ENCODE measurements at regions of chr2 and their contacts with region 1.

Region 1: DNA sequence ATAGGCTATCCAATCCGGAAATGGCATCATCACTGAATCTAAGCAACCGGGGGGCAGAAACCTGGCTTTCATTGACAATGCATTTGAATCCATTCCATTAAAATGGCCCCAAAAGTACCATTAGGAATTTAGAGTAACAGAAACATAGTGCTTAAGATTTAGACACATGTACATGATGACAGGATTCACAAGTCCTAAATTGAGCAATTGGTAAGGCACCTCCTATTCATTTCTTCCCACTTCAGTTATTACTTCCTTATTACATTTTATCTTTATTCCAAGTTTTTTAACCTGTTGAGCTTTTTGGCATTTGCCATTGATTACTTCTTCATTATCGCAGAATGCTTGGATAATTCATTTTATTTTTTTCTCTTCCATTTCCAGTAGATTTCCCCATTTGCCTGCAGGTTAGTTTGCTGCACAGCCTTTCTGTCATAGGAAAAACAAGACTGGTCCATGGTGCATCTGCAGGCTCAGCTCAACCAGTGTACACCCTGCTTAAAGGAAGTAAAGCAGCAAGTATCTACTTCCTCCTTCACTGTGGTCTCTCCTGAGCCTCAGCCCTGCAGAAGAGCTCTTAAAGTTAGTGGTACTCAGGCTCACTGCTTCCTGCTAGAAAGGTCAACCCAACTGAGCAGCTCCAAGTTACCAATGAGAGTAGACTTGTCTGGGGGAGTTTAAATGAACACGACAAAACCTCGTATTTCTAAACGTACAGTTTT is 89.2 kb downstream of the DOCK10 start:
- DNase-seq: peak in 7 of 9 donors; percentile 27 to 65 (median 49)
- ATAC-seq: peak; percentile 88
- H3K4me3 ChIP-seq: peak overlapping the region; percentile 10
- H3K4me3 Mint-ChIP-seq: peak overlapping the region; percentile 27 to 78 (median 70)
- H3K27ac ChIP-seq: peak overlapping the region; percentile 8
- H3K27ac Mint-ChIP-seq: peak overlapping the region; percentile 74 to 95 (median 87)
- H3K4me1 ChIP-seq: peaks cover 51 to 72% of the 10 kb centered on the region in 2 donors
- H3K4me1 Mint-ChIP-seq: peaks cover 57 to 96% (median 94%) of the 10 kb centered on the region in 7 donors
- H3K27me3 ChIP-seq: no peaks in the 10 kb centered on the region
- H3K27me3 Mint-ChIP-seq: no peaks in the 10 kb centered on the region

Region 2: GRCh38 chr2:224922142-224922727 is 30.9 kb before region 1 on chr2:
- CTCF ChIA-PET with region 1: interaction called, 6 read pairs
- POLR2A ChIA-PET with region 1: interaction called, 7 read pairs
- intact Hi-C with region 1: loop called in 1 of 2 experiments (anchors 5 kb)
- DNase-seq: no peak
- ATAC-seq: peak; percentile 55
- H3K4me3 ChIP-seq: no peak overlapping the region
- H3K4me3 Mint-ChIP-seq: peak overlapping the region in 2 of 10 donors; percentile 15 to 17
- H3K27ac ChIP-seq: peak overlapping the region; percentile 44
- H3K27ac Mint-ChIP-seq: peak overlapping the region; percentile 26 to 99 (median 82)
- H3K4me1 ChIP-seq: peaks cover 35 to 52% of the 10 kb centered on the region in 2 donors
- H3K4me1 Mint-ChIP-seq: peaks cover 36 to 55% (median 50%) of the 10 kb centered on the region in 7 donors
- H3K27me3 ChIP-seq: no peaks in the 10 kb centered on the region
- H3K27me3 Mint-ChIP-seq: no peaks in the 10 kb centered on the region

Region 3: GRCh38 chr2:224938651-224939182 is 14.4 kb before region 1 on chr2:
- CTCF ChIA-PET with region 1: interaction called, 4 read pairs
- POLR2A ChIA-PET with region 1: interaction called, 13 read pairs
- intact Hi-C with region 1: loop called in 1 of 2 experiments (anchors 2 kb)
- DNase-seq: peak in 1 of 9 donors; percentile 56
- ATAC-seq: peak; percentile 56
- H3K4me3 ChIP-seq: no peak overlapping the region
- H3K4me3 Mint-ChIP-seq: peak overlapping the region; percentile 46 to 81 (median 68)
- H3K27ac ChIP-seq: peak overlapping the region; percentile 62
- H3K27ac Mint-ChIP-seq: peak overlapping the region; percentile 78 to 92 (median 86)
- H3K4me1 ChIP-seq: peaks cover 44 to 62% of the 10 kb centered on the region in 2 donors
- H3K4me1 Mint-ChIP-seq: peaks cover 60 to 100% (median 84%) of the 10 kb centered on the region in 7 donors
- H3K27me3 ChIP-seq: no peaks in the 10 kb centered on the region
- H3K27me3 Mint-ChIP-seq: no peaks in the 10 kb centered on the region

Region 4: GRCh38 chr2:224973112-224974016 is 20.3 kb after region 1 on chr2:
- CTCF ChIA-PET with region 1: interaction called, 3 read pairs
- POLR2A ChIA-PET with region 1: interaction called, 6 read pairs
- intact Hi-C with region 1: loop called (anchors 1 to 2 kb)
- DNase-seq: no peak
- ATAC-seq: peak; percentile 56
- H3K4me3 ChIP-seq: no peak overlapping the region
- H3K4me3 Mint-ChIP-seq: peak overlapping the region in 3 of 10 donors; percentile 19 to 49 (median 40)
- H3K27ac ChIP-seq: no peak overlapping the region
- H3K27ac Mint-ChIP-seq: peak overlapping the region in 7 of 9 donors; percentile 1 to 80 (median 69)
- H3K4me1 ChIP-seq: peaks cover 21 to 40% of the 10 kb centered on the region in 2 donors
- H3K4me1 Mint-ChIP-seq: peaks cover 55 to 96% (median 93%) of the 10 kb centered on the region in 7 donors
- H3K27me3 ChIP-seq: no peaks in the 10 kb centered on the region
- H3K27me3 Mint-ChIP-seq: no peaks in the 10 kb centered on the region

Region 5: DNA sequence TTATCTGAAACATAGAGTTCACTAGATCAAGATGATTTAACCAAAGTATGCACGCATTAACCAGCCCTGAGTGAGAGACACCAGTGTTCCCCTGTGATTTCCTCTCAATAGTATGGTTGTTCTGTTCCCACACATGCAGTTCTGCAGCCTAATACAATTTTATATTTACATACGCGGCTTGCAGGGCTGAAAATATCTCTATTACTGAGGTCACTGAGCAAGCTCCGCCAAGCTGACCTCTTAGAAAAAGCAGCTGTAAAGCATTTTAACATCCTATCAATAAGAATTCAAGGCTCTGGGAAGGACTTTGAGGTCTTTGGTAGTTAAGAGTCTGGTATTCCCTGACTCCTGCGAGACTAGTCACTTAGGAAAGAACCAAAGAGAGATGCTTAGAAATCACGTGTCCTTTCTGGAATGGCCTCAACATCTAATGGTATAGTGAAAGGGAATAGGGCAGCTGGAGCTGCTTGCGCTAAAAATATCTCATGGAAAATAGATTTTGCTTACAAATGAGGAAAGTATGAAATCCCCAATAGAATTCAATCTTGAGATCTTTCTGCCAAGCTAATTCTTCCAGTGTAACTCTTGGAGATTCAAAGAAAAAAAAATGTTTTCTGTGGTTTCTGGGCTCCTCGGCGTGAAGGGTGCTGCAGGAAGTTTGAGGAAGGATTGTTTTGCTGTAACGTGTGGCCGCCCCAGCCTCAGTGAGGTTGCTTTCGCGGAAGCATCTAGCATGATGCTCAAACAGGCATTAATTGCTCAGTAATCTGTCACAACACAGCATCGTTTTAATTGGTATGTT is 30.0 kb after region 1 on chr2:
- CTCF ChIA-PET with region 1: no interaction called
- POLR2A ChIA-PET with region 1: interaction called, 7 read pairs
- intact Hi-C with region 1: loop called in 1 of 2 experiments (anchors 1 kb)
- DNase-seq: peak in 7 of 9 donors; percentile 44 to 66 (median 52)
- ATAC-seq: peak; percentile 74
- H3K4me3 ChIP-seq: no peak overlapping the region
- H3K4me3 Mint-ChIP-seq: peak overlapping the region; percentile 63 to 85 (median 77)
- H3K27ac ChIP-seq: peak overlapping the region; percentile 50
- H3K27ac Mint-ChIP-seq: peak overlapping the region; percentile 85 to 97 (median 92)
- H3K4me1 ChIP-seq: peaks cover 42 to 58% of the 10 kb centered on the region in 2 donors
- H3K4me1 Mint-ChIP-seq: peaks cover 55 to 91% (median 89%) of the 10 kb centered on the region in 7 donors
- H3K27me3 ChIP-seq: no peaks in the 10 kb centered on the region
- H3K27me3 Mint-ChIP-seq: no peaks in the 10 kb centered on the region